Activated CD4-positive, alpha-beta memory T cell treated with anti-CD3 and anti-CD28 coated beads, Interleukin-2, amount 10 ng/mL, durations not matched to agents 7 days and 5 days (primary cell): ENCODE measurements at regions of chr17 and their contacts with region 1.

Region 1: DNA sequence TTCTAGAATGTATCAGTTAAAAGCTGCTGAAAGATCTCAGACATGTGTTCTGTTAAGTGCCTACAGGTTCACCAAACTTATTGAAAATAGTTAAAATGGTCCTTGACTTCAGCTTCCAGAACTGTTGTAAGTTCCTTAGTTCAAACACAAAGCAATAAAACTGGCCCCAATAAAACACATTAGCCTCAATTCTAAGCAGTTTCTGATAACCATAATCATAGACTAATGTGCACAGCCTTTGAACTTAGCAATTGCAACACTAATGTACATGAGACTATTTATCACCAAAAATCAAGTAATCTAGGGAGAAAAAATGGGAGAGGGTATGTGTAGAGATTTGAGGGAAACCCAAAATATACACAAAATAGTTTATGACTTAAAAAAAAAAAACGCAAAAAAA is 15.4 kb downstream of the PIGL start:
- DNase-seq: no peak
- H3K4me3 Mint-ChIP-seq: no peak overlapping the region
- H3K27ac Mint-ChIP-seq: no peak overlapping the region
- H3K4me1 Mint-ChIP-seq: peaks cover 19% of the 10 kb centered on the region
- H3K27me3 Mint-ChIP-seq: no peaks in the 10 kb centered on the region

Region 2: DNA sequence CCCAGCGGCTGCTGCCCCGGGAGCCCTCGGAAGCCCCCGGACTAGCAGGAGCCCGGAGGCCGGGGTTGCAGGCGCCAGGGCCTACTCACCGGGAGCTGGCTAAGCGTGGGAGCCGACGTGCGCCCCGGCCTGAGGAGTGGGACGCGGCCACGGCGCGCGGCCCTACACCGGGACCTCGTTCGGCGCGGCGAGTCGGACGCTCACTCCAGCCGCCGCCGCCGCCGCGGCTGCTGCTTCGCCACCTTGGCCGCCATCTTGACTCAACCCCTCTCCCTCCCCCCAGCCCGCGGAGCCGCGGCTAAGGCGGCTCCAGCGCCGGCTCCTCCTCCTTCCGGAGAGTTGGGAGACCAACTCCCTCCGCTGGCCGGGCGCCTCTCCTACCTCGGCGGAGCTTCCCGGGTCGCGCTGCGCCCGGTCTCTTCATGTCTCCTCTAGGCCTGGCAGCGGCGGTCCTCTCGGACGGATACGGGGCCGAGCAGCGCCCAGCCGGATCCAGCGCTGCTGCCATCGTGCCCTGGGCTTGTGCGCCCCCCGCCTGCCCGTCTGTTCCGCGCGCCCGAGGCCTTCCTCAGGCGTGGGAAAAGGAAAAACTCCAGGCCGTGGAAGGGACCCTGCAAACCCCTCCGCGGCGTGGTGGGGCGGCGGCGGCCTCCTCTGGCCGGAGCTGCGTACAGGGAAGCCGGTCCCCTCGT is 17.0 kb before region 1 on chr17 and contains the start of gene NCOR1:
- CTCF ChIA-PET with region 1: interaction called, 4 read pairs
- POLR2A ChIA-PET with region 1: interaction called, 36 read pairs
- DNase-seq: peak; percentile 91
- H3K4me3 Mint-ChIP-seq: peak within 1 kb of the TSS; percentile 97
- H3K27ac Mint-ChIP-seq: peak within 1 kb of the TSS; percentile 77
- H3K4me1 Mint-ChIP-seq: peaks cover 49% of the 10 kb centered on the region
- H3K27me3 Mint-ChIP-seq: no peaks in the 10 kb centered on the region
- total RNA-seq, gene NCOR1: 136 to 141 TPM

Region 3: DNA sequence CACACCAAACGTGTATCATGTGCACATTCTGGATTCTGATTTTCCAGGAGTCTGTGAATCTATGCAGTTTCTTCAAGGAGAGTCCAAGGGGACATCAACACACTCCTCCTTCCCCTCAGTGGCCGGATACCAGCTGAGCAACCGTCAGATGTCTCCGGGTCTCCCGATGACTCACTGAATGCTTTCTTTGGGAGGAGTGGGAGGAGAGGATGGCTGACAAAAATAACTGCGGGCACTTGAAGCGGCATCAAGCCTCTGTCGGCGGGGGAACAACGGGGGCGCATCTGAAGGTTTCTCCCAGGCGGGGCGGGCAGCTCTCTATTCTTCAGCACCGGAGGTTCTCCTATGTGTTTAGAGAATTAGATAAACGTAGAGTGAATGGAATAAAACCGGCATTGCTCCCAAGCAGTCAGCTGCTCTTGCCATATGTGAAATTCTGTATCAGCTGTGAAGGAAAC is 284.2 kb after region 1 on chr17:
- CTCF ChIA-PET with region 1: no interaction called
- POLR2A ChIA-PET with region 1: no interaction called
- DNase-seq: no peak
- H3K4me3 Mint-ChIP-seq: no peak overlapping the region
- H3K27ac Mint-ChIP-seq: no peak overlapping the region
- H3K4me1 Mint-ChIP-seq: peaks cover 11% of the 10 kb centered on the region
- H3K27me3 Mint-ChIP-seq: peaks cover 39% of the 10 kb centered on the region